ENCODE measurements at regions of chr1 and their contacts with region 1.

Region 1: GRCh38 chr1:77430966-77431690 is 149.3 kb downstream of the AK5 start:
- DNase-seq: peak in 7 of 9 donors; percentile 40 to 81 (median 68)
- ATAC-seq: peak; percentile 97
- H3K4me3 ChIP-seq: peak overlapping the region; percentile 3
- H3K4me3 Mint-ChIP-seq: no peak overlapping the region
- H3K27ac ChIP-seq: peak overlapping the region; percentile 65
- H3K27ac Mint-ChIP-seq: no peak overlapping the region
- H3K4me1 ChIP-seq: peaks cover 32 to 55% of the 10 kb centered on the region in 2 donors
- H3K4me1 Mint-ChIP-seq: peaks cover 5 to 33% (median 20%) of the 10 kb centered on the region in 7 donors
- H3K27me3 ChIP-seq: no peaks in the 10 kb centered on the region
- H3K27me3 Mint-ChIP-seq: no peaks in the 10 kb centered on the region

Region 2: GRCh38 chr1:77143529-77144121 is 287.5 kb before region 1 on chr1:
- CTCF ChIA-PET with region 1: no interaction called
- POLR2A ChIA-PET with region 1: no interaction called
- intact Hi-C with region 1: loop called in 1 of 2 experiments (anchors 1 kb)
- DNase-seq: peak in 4 of 9 donors; percentile 9 to 31 (median 18)
- ATAC-seq: no peak
- H3K4me3 ChIP-seq: no peak overlapping the region
- H3K4me3 Mint-ChIP-seq: no peak overlapping the region
- H3K27ac ChIP-seq: no peak overlapping the region
- H3K27ac Mint-ChIP-seq: no peak overlapping the region
- H3K4me1 ChIP-seq: peaks cover 0 to 3% of the 10 kb centered on the region in 2 donors
- H3K4me1 Mint-ChIP-seq: peaks cover 0 to 8% (median 6%) of the 10 kb centered on the region in 7 donors
- H3K27me3 ChIP-seq: no peaks in the 10 kb centered on the region
- H3K27me3 Mint-ChIP-seq: no peaks in the 10 kb centered on the region

Region 3: DNA sequence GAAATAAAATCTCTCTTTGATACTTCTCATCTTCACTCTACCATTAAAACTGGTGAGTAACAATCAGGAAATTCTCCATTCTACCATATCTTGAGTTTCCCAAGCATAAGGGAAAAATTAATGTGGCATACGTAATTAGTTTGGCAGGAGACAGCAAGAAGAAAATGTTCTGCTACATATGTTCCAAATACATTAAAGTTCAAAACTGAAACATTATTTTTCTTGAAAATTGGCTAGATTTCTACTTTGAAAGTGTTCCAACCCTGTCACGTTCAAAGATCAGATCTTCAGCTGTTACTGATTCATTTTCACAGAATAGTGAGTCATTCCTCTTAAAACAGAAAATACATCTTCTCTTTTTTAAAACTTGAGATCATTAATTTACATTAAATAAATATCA is 260.4 kb before region 1 on chr1:
- CTCF ChIA-PET with region 1: no interaction called
- POLR2A ChIA-PET with region 1: no interaction called
- intact Hi-C with region 1: no loop called
- DNase-seq: no peak
- ATAC-seq: no peak
- H3K4me3 ChIP-seq: no peak overlapping the region
- H3K4me3 Mint-ChIP-seq: no peak overlapping the region
- H3K27ac ChIP-seq: no peak overlapping the region
- H3K27ac Mint-ChIP-seq: peak overlapping the region in 1 of 9 donors; percentile 9
- H3K4me1 ChIP-seq: peaks cover 0 to 4% of the 10 kb centered on the region in 2 donors
- H3K4me1 Mint-ChIP-seq: peaks cover 0 to 24% (median 17%) of the 10 kb centered on the region in 7 donors
- H3K27me3 ChIP-seq: no peaks in the 10 kb centered on the region
- H3K27me3 Mint-ChIP-seq: no peaks in the 10 kb centered on the region

Region 4: DNA sequence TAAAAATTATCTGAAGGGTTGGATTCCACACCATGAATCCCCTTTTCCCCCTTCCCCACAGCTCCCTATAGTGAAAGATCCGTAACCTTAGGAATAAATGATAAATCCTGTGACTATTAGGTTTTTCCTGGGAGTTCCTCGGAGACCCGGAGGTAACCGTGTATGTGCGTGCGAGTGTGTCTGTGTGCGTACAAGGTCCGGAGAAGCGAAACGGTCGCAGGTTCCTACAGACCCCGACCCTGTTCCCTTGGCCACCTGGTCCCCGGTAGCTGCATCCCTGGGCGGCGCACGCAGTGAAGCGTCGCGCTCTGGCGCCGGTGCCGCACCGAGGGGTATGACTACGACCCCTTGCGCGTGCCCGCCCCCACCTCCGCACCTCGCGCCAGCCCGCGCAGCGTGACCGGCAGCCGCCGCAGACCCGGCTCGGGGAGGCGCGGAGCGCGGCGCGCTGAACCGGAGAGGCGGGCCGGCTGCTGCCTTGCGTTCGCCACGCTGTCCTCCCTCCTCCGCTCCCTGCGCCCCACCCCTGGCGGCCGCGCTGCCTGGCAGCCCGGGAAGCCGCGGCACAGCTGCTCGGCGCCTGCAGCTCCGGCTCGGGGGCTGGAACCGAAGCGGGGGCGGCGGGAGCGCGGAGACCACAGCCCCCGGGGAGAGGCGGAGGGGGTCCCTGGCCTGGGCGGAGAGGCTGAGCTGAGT is 149.5 kb before region 1 on chr1 and contains the start of gene AK5:
- CTCF ChIA-PET with region 1: interaction called, 3 read pairs
- POLR2A ChIA-PET with region 1: interaction called, 6 read pairs
- intact Hi-C with region 1: loop called in 1 of 2 experiments (anchors 1 kb)
- DNase-seq: peak; percentile 32 to 60 (median 53)
- ATAC-seq: peak; percentile 76
- H3K4me3 ChIP-seq: peak within 1 kb of the TSS; percentile 74
- H3K4me3 Mint-ChIP-seq: peak within 1 kb of the TSS; percentile 75 to 95 (median 92)
- H3K27ac ChIP-seq: peak within 1 kb of the TSS; percentile 67
- H3K27ac Mint-ChIP-seq: peak within 1 kb of the TSS in 8 of 9 donors; percentile 76 to 95 (median 84)
- H3K4me1 ChIP-seq: peaks cover 0 to 31% of the 10 kb centered on the region in 2 donors
- H3K4me1 Mint-ChIP-seq: peaks cover 29 to 72% (median 59%) of the 10 kb centered on the region in 7 donors
- H3K27me3 ChIP-seq: no peaks in the 10 kb centered on the region
- H3K27me3 Mint-ChIP-seq: peaks cover 0 to 46% (median 0%) of the 10 kb centered on the region in 5 donors
- total RNA-seq, gene AK5: 1.7 to 59.4 (median 41.0) TPM

Region 5: DNA sequence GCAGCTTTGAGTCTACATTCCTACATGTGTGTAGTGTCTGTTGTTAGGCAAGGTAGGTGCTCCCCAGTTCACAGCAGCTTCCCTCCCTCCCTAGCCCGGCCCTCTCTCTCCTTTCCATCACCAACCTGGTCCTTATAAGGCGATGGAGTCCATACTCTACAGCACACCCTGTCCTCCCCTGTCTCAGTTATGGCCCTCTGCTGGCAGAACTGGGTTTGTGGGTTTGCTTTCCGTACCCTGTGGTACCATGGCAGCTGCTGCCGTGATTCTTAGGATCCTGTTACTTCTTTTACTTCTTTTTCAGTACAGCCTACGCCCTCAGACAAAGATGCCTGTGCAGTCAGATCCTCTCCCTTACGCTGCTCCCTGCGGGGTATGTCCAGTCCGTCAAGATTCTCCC is 117.6 kb before region 1 on chr1:
- CTCF ChIA-PET with region 1: no interaction called
- POLR2A ChIA-PET with region 1: interaction called, 3 read pairs
- intact Hi-C with region 1: loop called in 1 of 2 experiments (anchors 1 kb)
- DNase-seq: peak in 8 of 9 donors; percentile 7 to 29 (median 26)
- ATAC-seq: peak; percentile 82
- H3K4me3 ChIP-seq: no peak overlapping the region
- H3K4me3 Mint-ChIP-seq: peak overlapping the region in 4 of 10 donors; percentile 23 to 53 (median 38)
- H3K27ac ChIP-seq: no peak overlapping the region
- H3K27ac Mint-ChIP-seq: peak overlapping the region in 8 of 9 donors; percentile 13 to 84 (median 68)
- H3K4me1 ChIP-seq: peaks cover 2 to 19% of the 10 kb centered on the region in 2 donors
- H3K4me1 Mint-ChIP-seq: peaks cover 17 to 58% (median 49%) of the 10 kb centered on the region in 7 donors
- H3K27me3 ChIP-seq: no peaks in the 10 kb centered on the region
- H3K27me3 Mint-ChIP-seq: no peaks in the 10 kb centered on the region

Region 6: GRCh38 chr1:77378723-77379535 is 52.2 kb before region 1 on chr1:
- CTCF ChIA-PET with region 1: no interaction called
- POLR2A ChIA-PET with region 1: interaction called, 4 read pairs
- intact Hi-C with region 1: loop called in 1 of 2 experiments (anchors 5 kb)
- DNase-seq: peak in 3 of 9 donors; percentile 3 to 18 (median 9)
- ATAC-seq: peak; percentile 31
- H3K4me3 ChIP-seq: no peak overlapping the region
- H3K4me3 Mint-ChIP-seq: peak overlapping the region in 4 of 10 donors; percentile 10 to 43 (median 14)
- H3K27ac ChIP-seq: no peak overlapping the region
- H3K27ac Mint-ChIP-seq: peak overlapping the region in 7 of 9 donors; percentile 7 to 83 (median 62)
- H3K4me1 ChIP-seq: peaks cover 0 to 8% of the 10 kb centered on the region in 2 donors
- H3K4me1 Mint-ChIP-seq: peaks cover 0 to 65% (median 32%) of the 10 kb centered on the region in 7 donors
- H3K27me3 ChIP-seq: no peaks in the 10 kb centered on the region
- H3K27me3 Mint-ChIP-seq: no peaks in the 10 kb centered on the region

Region 7: GRCh38 chr1:77473690-77474089 is 42.6 kb after region 1 on chr1:
- CTCF ChIA-PET with region 1: no interaction called
- POLR2A ChIA-PET with region 1: no interaction called
- intact Hi-C with region 1: loop called in 1 of 2 experiments (anchors 5 kb)
- DNase-seq: no peak
- ATAC-seq: no peak
- H3K4me3 ChIP-seq: no peak overlapping the region
- H3K4me3 Mint-ChIP-seq: no peak overlapping the region
- H3K27ac ChIP-seq: no peak overlapping the region
- H3K27ac Mint-ChIP-seq: peak overlapping the region in 2 of 9 donors; percentile 21 to 43
- H3K4me1 ChIP-seq: no peaks in the 10 kb centered on the region
- H3K4me1 Mint-ChIP-seq: peaks cover 0 to 46% (median 31%) of the 10 kb centered on the region in 7 donors
- H3K27me3 ChIP-seq: no peaks in the 10 kb centered on the region
- H3K27me3 Mint-ChIP-seq: no peaks in the 10 kb centered on the region

Region 8: GRCh38 chr1:77533660-77534305 is 102.7 kb after region 1 on chr1:
- CTCF ChIA-PET with region 1: interaction called, 5 read pairs
- POLR2A ChIA-PET with region 1: interaction called, 3 read pairs
- intact Hi-C with region 1: loop called in 1 of 2 experiments (anchors 2 kb)
- DNase-seq: peak; percentile 34 to 75 (median 60)
- ATAC-seq: peak; percentile 71
- H3K4me3 ChIP-seq: no peak overlapping the region
- H3K4me3 Mint-ChIP-seq: peak overlapping the region in 6 of 10 donors; percentile 22 to 69 (median 50)
- H3K27ac ChIP-seq: no peak overlapping the region
- H3K27ac Mint-ChIP-seq: peak overlapping the region in 8 of 9 donors; percentile 16 to 94 (median 38)
- H3K4me1 ChIP-seq: peaks cover 0 to 4% of the 10 kb centered on the region in 2 donors
- H3K4me1 Mint-ChIP-seq: peaks cover 2 to 16% (median 10%) of the 10 kb centered on the region in 7 donors
- H3K27me3 ChIP-seq: no peaks in the 10 kb centered on the region
- H3K27me3 Mint-ChIP-seq: no peaks in the 10 kb centered on the region

Region 9: GRCh38 chr1:77948841-77949424 is 517.8 kb after region 1 on chr1:
- CTCF ChIA-PET with region 1: no interaction called
- POLR2A ChIA-PET with region 1: no interaction called
- intact Hi-C with region 1: no loop called
- DNase-seq: no peak
- ATAC-seq: no peak
- H3K4me3 ChIP-seq: no peak overlapping the region
- H3K4me3 Mint-ChIP-seq: no peak overlapping the region
- H3K27ac ChIP-seq: no peak overlapping the region
- H3K27ac Mint-ChIP-seq: peak overlapping the region in 5 of 9 donors; percentile 25 to 83 (median 60)
- H3K4me1 ChIP-seq: no peaks in the 10 kb centered on the region
- H3K4me1 Mint-ChIP-seq: peaks cover 9 to 34% (median 21%) of the 10 kb centered on the region in 7 donors
- H3K27me3 ChIP-seq: no peaks in the 10 kb centered on the region
- H3K27me3 Mint-ChIP-seq: no peaks in the 10 kb centered on the region

Measured in naive thymus-derived CD4-positive, alpha-beta T cell (primary cell).